Uterus (tissue), 4 donors: ENCODE measurements at regions of chr5 and their contacts with region 1.

Region 1: DNA sequence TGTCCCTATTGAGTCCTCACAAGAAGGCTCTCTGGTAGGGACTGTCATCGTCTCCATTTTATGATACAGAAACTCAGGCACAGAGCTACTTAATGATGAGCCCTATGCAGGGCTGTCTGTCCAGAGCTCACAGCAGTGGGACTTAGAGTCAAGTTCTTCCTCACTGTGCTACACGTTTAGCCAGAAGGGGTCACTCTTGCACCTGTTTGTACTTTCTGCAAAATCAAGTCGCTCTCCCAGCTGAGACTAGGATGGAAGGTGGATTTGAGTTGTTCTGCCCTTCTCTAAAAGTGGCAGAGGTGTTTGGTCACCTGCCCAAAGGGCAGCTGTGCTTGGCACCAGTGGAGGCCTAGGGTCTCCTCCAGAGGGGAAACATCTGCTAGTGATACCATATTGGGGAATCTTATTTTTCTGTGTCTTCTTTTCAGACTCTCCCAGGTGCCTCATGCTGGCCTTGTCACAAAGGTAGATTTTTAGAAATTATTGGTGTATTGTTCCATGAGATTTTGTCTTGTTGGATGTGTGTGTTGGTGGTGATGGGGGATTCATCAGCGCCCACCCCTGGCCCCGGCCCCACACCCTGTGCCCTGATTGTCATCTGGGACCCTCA is 104.2 kb downstream of the PPARGC1B start:
- DNase-seq: peak in 1 of 2 donors; percentile 55
- H3K4me3 ChIP-seq: no peak overlapping the region
- H3K27ac ChIP-seq: no peak overlapping the region
- H3K4me1 ChIP-seq: no peaks in the 10 kb centered on the region
- H3K27me3 ChIP-seq: no peaks in the 10 kb centered on the region
- CTCF ChIP-seq: peak; percentile 32 to 67 (median 54)
- POLR2A ChIP-seq: no peak

Region 2: GRCh38 chr5:149240354-149240998 is 593.9 kb before region 1 on chr5:
- intact Hi-C with region 1: no loop called
- DNase-seq: peak in 1 of 2 donors; percentile 19
- H3K4me3 ChIP-seq: no peak overlapping the region
- H3K27ac ChIP-seq: no peak overlapping the region
- H3K4me1 ChIP-seq: no peaks in the 10 kb centered on the region
- H3K27me3 ChIP-seq: no peaks in the 10 kb centered on the region
- CTCF ChIP-seq: no peak
- POLR2A ChIP-seq: no peak

Region 3: DNA sequence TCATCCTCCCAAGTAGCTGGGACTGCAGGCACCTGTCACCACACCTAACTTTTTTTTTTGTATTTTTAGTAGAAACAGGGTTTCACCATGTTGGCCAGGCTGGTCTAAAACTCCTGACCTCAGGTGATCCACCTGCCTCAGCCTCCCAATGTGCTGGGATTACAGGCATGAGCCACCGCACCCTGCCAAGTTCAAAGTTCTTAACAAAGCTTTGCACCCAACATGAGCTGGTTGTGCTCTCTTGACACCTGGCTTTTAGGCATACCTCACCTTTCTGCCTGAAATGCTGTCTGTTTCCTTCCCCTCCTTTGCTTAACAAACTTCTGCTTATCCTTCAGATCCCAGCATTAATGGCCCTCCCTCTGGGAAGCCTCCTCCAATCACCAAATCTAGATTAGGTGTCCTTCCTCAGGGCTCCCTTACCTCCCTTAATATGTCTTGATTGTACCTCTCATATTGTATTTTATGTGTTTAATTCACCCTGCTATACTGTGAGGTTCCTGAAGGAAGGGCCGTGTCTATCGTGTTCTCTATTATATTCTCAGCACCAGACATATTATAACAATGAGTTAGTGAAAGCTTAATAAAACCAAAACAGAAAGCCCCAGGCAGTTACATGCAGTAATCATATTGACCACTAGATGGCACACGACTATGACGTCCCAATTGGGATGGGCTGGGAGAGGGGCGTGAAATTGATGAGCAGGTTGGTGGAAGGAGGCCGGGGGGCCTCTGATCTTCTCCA is 167.1 kb before region 1 on chr5:
- intact Hi-C with region 1: no loop called
- DNase-seq: no peak
- H3K4me3 ChIP-seq: no peak overlapping the region
- H3K27ac ChIP-seq: no peak overlapping the region
- H3K4me1 ChIP-seq: no peaks in the 10 kb centered on the region
- H3K27me3 ChIP-seq: no peaks in the 10 kb centered on the region
- CTCF ChIP-seq: peak; percentile 43 to 51 (median 46)
- POLR2A ChIP-seq: no peak

Region 4: DNA sequence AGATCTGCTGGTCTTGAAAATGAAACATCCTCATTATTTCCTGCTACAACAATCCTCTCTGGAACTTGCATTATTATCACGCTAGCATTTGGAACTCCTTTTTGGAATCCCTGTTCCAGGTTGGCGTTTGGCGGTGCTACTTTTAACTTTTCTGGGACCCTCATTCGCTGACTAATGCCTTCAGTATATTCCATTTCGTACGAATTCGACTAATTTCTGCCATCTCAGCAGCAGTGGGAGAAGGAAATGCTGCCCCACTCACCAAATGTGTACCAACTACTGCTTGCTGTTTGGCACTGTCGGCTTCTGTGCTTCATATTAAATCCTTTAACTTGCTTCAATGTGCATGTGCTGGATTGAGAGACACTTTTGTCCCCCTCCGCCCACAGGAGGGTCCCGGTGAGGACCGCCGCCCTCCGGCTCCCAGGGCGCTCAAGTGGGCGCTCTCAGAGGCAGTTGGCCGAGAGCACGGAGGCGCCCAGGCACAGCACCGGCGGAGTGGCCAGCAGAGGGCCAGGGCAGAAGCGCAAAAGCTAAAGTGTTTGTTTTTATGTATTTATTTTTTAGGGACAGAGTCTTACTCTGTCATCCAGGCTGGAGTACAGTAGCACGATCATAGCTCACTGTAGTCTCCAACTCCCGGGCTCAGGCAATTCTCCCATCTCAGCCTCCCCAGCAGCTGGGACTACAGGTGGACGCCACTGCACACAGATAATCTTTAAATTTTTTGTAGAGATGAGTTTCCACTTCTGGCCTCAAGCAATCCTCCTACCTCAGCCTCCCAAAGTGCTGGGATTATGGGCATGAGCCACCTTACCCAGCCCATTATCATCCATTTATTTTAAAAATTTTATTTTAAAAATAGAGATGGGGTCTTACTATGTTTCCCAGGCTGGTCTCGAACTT is 98.3 kb after region 1 on chr5:
- intact Hi-C with region 1: no loop called
- DNase-seq: peak in 1 of 2 donors; percentile 18
- H3K4me3 ChIP-seq: no peak overlapping the region
- H3K27ac ChIP-seq: no peak overlapping the region
- H3K4me1 ChIP-seq: no peaks in the 10 kb centered on the region
- H3K27me3 ChIP-seq: no peaks in the 10 kb centered on the region
- CTCF ChIP-seq: peak in 1 of 4 experiments; percentile 18
- POLR2A ChIP-seq: no peak

Region 5: GRCh38 chr5:149979896-149980295 is 145.5 kb after region 1 on chr5:
- intact Hi-C with region 1: loop called (anchors 5 kb)
- DNase-seq: no peak
- H3K4me3 ChIP-seq: no peak overlapping the region
- H3K27ac ChIP-seq: no peak overlapping the region
- H3K4me1 ChIP-seq: no peaks in the 10 kb centered on the region
- H3K27me3 ChIP-seq: no peaks in the 10 kb centered on the region
- CTCF ChIP-seq: no peak
- POLR2A ChIP-seq: no peak

Region 6: GRCh38 chr5:149990518-149991376 is 156.4 kb after region 1 on chr5:
- intact Hi-C with region 1: loop called (anchors 5 kb)
- DNase-seq: peak; percentile 62 to 72
- H3K4me3 ChIP-seq: no peak overlapping the region
- H3K27ac ChIP-seq: no peak overlapping the region
- H3K4me1 ChIP-seq: no peaks in the 10 kb centered on the region
- H3K27me3 ChIP-seq: no peaks in the 10 kb centered on the region
- CTCF ChIP-seq: peak; percentile 85 to 89 (median 88)
- POLR2A ChIP-seq: no peak

Region 7: DNA sequence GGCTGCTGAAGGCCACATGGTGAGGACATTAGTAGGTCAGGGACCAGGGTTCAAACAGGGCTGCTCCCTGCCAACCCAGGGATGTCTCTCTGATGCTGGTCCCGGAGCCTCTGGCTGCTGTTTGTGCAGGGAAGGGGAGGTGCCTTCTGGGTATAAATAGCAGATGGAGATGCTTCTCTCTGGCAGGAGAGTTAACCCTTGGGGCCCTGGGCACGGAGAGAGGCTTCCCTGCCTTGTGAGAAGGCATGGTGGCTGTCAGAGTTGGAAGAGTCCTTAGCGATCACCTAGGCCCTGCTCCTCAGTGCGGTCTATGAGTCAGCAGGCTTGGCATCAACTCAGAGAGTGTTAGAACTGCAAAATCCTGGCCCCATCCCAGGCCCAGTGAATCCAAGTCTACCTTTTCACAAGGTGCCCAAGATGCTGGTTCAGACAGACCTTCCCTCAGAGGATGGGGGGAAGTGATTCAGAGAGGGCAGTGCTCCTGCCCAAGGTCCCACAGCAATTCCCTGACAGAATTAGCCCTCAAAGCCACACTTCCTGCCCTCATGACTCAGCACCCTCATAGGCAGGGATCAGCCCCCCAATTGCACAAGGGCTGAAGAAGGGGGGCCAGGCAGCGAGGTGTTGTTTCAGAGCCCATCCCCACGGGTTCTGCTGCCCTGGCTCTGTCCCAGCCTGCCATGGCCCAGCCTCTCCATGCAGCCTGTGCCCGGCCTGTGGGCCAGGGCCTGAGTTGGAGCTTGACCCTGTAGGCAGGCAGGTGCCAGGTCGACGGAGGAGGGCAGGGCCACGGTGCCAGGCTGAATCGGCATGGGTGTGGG is 429.7 kb after region 1 on chr5:
- intact Hi-C with region 1: no loop called
- DNase-seq: peak; percentile 63 to 77
- H3K4me3 ChIP-seq: no peak overlapping the region
- H3K27ac ChIP-seq: peak overlapping the region in 1 of 2 donors; percentile 27
- H3K4me1 ChIP-seq: no peaks in the 10 kb centered on the region
- H3K27me3 ChIP-seq: no peaks in the 10 kb centered on the region
- CTCF ChIP-seq: no peak
- POLR2A ChIP-seq: no peak